ENCODE measurements at regions of chr6 and their contacts with region 1.

Region 1: GRCh38 chr6:138012682-138013081 is 94.5 kb downstream of the PERP start:
- DNase-seq: no peak
- H3K4me3 ChIP-seq: no peak overlapping the region
- H3K27ac ChIP-seq: no peak overlapping the region
- H3K4me1 ChIP-seq: no peaks in the 10 kb centered on the region
- H3K27me3 ChIP-seq: no peaks in the 10 kb centered on the region
- CTCF ChIP-seq: no peak
- POLR2A ChIP-seq: no peak

Region 2: DNA sequence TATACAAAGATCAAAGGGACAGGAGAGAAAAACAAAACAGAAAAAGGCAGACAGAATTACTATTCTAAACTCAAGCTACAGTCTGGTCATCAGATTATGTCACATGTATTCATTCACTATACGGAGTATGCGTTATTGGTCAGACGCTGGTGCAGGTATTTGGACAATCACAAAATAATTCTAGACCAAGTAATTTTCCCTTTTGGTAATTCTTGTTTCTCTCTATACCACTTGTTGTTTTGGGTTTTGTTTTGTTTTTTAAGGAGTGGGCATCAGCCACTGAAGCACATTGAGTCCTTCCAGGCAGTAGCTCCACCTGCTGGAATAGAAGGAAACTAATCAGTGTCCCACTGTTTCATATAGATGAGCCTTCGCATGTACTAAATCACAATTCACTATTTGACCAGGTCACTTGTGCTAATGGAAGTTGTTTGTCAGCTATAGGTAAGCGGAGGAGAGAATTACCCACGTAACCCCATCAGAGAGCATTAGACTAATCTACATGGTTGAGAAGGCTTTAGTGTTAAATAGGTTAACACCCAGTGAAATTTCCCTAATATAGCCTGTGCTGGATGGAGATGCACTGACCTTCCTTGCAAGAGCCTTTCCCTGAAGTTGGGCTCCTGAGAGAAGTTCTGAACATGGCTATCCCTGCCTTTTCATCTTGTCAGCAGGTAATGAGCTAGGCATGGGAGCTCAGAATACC is 67.7 kb before region 1 on chr6:
- intact Hi-C with region 1: no loop called
- DNase-seq: peak in 3 of 7 donors; percentile 26 to 28 (median 27)
- H3K4me3 ChIP-seq: no peak overlapping the region
- H3K27ac ChIP-seq: no peak overlapping the region
- H3K4me1 ChIP-seq: no peaks in the 10 kb centered on the region
- H3K27me3 ChIP-seq: no peaks in the 10 kb centered on the region
- CTCF ChIP-seq: peak; percentile 67 to 82 (median 78)
- POLR2A ChIP-seq: no peak

Region 3: DNA sequence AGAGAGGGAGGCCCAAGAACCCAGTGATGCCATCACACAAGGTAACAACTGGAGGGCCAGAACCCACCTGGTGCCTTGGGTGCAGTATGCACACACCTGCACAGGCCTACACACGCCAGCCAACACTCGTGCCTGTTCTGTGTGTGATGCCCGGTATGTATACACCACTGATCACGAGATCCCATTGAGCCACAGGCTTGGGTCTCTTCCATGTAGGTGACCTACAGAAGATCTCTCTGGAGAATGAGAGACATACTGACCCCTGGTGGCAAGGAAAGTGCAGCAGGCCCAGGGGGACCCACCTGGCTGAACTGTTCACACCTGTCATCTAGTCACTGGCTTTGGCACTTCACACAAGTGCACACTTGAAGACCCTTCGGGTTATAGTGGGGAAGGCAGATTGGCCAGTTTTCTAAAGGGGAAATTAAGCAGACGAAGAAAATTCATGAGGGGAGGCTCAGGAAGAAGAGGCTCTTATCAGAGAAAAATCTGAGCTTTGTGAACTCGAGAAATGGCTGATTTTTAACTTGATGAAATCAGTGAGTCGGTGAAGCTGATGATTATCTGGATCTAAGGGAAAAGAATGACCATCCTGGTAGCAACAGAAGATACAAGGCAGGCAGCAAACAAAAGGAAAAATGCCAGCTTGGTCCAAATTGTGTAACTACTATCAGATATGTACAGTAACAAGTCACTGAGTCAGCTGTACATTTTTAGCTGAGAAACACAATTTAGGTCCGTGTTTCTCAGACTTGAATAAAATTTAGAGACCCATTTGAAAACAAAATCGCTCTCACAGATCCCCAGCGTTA is 274.7 kb after region 1 on chr6:
- intact Hi-C with region 1: loop called in 1 of 2 experiments (anchors 10 kb)
- DNase-seq: peak; percentile 33 to 77 (median 55)
- H3K4me3 ChIP-seq: no peak overlapping the region
- H3K27ac ChIP-seq: no peak overlapping the region
- H3K4me1 ChIP-seq: no peaks in the 10 kb centered on the region
- H3K27me3 ChIP-seq: no peaks in the 10 kb centered on the region
- CTCF ChIP-seq: peak; percentile 34 to 62 (median 56)
- POLR2A ChIP-seq: no peak